Gastrocnemius medialis (tissue), 4 donors: ENCODE measurements at regions of chr1 and their contacts with region 1.

Region 1: DNA sequence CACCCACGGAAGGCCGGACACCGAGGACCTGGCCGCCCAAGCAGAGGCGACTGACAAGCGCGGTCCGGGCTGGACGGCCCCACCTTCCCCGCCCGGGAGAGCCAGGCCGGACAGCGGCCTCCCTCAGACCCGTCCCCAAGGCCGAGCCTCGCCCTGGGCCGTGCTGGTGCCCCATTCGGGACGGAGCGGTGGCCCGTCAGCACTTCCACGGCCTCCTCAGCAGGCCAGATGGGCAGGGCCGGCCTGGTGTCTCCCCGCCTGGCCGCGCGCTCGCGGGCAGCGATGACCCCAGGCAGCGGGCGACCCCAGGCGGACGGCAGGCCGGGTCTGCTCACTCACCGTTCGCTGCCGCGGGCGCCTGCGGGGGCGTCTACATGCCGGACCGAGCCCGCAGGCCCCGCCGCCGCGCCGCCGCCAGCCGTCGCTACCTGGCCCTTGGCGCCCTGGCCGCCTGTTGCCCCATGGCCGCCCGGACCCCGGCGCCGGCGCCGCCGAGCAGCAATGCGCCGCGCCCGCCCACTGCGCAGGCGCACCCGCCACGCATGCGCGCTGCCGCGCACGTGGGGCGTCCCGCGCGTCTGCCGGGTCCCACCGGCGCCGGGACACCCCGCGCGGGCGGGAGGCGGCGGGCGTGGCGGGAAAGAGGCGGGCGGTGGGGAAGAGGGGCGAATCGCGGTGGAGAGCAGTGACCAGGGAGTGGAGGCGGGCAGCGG is at the start of gene NADK:
- DNase-seq: peak in 1 of 2 donors; percentile 59
- ATAC-seq: peak; percentile 82 to 83
- H3K4me3 ChIP-seq: peak within 1 kb of the TSS; percentile 79 to 95 (median 86)
- H3K27ac ChIP-seq: peak within 1 kb of the TSS; percentile 89 to 99 (median 94)
- H3K4me1 ChIP-seq: peaks cover 47 to 62% of the 10 kb centered on the region in 2 donors
- H3K27me3 ChIP-seq: no peaks in the 10 kb centered on the region
- CTCF ChIP-seq: peak in 1 of 5 experiments; percentile 24
- POLR2A ChIP-seq: peak; percentile 78 to 84
- total RNA-seq, gene NADK: 20.1 to 33.1 (median 32.5) TPM

Region 2: GRCh38 chr1:1796466-1796865 is 18.4 kb after region 1 on chr1:
- in situ Hi-C with region 1: no loop called
- intact Hi-C with region 1: loop called (anchors 1 kb)
- DNase-seq: no peak
- ATAC-seq: no peak
- H3K4me3 ChIP-seq: no peak overlapping the region
- H3K27ac ChIP-seq: no peak overlapping the region
- H3K4me1 ChIP-seq: peaks cover 9 to 14% of the 10 kb centered on the region in 2 donors
- H3K27me3 ChIP-seq: no peaks in the 10 kb centered on the region
- CTCF ChIP-seq: no peak
- POLR2A ChIP-seq: no peak